ENCODE measurements at regions of chr19 and their contacts with region 1.

Region 1: GRCh38 chr19:48646001-48646721 is at the start of gene CA11:
- DNase-seq: peak; percentile 91 to 96 (median 94)
- H3K4me3 ChIP-seq: peak within 1 kb of the TSS; percentile 85 to 87
- H3K4me3 Mint-ChIP-seq: peak within 1 kb of the TSS; percentile 86 to 98 (median 93)
- H3K27ac ChIP-seq: peak within 1 kb of the TSS; percentile 77
- H3K27ac Mint-ChIP-seq: peak within 1 kb of the TSS; percentile 83 to 97 (median 96)
- H3K4me1 ChIP-seq: peaks cover 46% of the 10 kb centered on the region
- H3K4me1 Mint-ChIP-seq: peaks cover 23 to 55% (median 41%) of the 10 kb centered on the region in 4 donors
- H3K27me3 ChIP-seq: no peaks in the 10 kb centered on the region
- H3K27me3 Mint-ChIP-seq: no peaks in the 10 kb centered on the region
- total RNA-seq, gene CA11: 13.7 to 15.4 TPM

Region 2: GRCh38 chr19:48624067-48624594 is 22.0 kb before region 1 on chr19:
- CTCF ChIA-PET with region 1: interaction called, 7 read pairs
- POLR2A ChIA-PET with region 1: interaction called, 76 read pairs
- intact Hi-C with region 1: loop called (anchors 1 kb)
- DNase-seq: peak; percentile 87 to 91 (median 90)
- H3K4me3 ChIP-seq: peak overlapping the region; percentile 13 to 33
- H3K4me3 Mint-ChIP-seq: peak overlapping the region; percentile 59 to 93 (median 84)
- H3K27ac ChIP-seq: peak overlapping the region; percentile 68
- H3K27ac Mint-ChIP-seq: peak overlapping the region; percentile 79 to 98 (median 96)
- H3K4me1 ChIP-seq: peaks cover 27% of the 10 kb centered on the region
- H3K4me1 Mint-ChIP-seq: peaks cover 22 to 54% (median 34%) of the 10 kb centered on the region in 4 donors
- H3K27me3 ChIP-seq: no peaks in the 10 kb centered on the region
- H3K27me3 Mint-ChIP-seq: no peaks in the 10 kb centered on the region

Region 3: GRCh38 chr19:48660854-48661731 is 14.9 kb after region 1 on chr19:
- CTCF ChIA-PET with region 1: interaction called, 4 read pairs
- POLR2A ChIA-PET with region 1: interaction called, 8 read pairs
- intact Hi-C with region 1: loop called (anchors 1 kb)
- DNase-seq: peak; percentile 82 to 88 (median 85)
- H3K4me3 ChIP-seq: peak overlapping the region in 1 of 2 donors; percentile 25
- H3K4me3 Mint-ChIP-seq: peak overlapping the region; percentile 70 to 87 (median 81)
- H3K27ac ChIP-seq: peak overlapping the region; percentile 44
- H3K27ac Mint-ChIP-seq: peak overlapping the region; percentile 79 to 99 (median 98)
- H3K4me1 ChIP-seq: peaks cover 10% of the 10 kb centered on the region
- H3K4me1 Mint-ChIP-seq: peaks cover 5 to 12% (median 8%) of the 10 kb centered on the region in 4 donors
- H3K27me3 ChIP-seq: no peaks in the 10 kb centered on the region
- H3K27me3 Mint-ChIP-seq: no peaks in the 10 kb centered on the region

Region 4: GRCh38 chr19:48713864-48714758 is 68.0 kb after region 1 on chr19:
- CTCF ChIA-PET with region 1: interaction called, 4 read pairs
- POLR2A ChIA-PET with region 1: interaction called, 15 read pairs
- intact Hi-C with region 1: loop called (anchors 1 kb)
- DNase-seq: peak; percentile 96 to 99 (median 97)
- H3K4me3 ChIP-seq: peak overlapping the region; percentile 63 to 73
- H3K4me3 Mint-ChIP-seq: peak overlapping the region; percentile 83 to 94 (median 90)
- H3K27ac ChIP-seq: peak overlapping the region; percentile 70
- H3K27ac Mint-ChIP-seq: peak overlapping the region; percentile 57 to 95 (median 92)
- H3K4me1 ChIP-seq: peaks cover 24% of the 10 kb centered on the region
- H3K4me1 Mint-ChIP-seq: peaks cover 4 to 34% (median 15%) of the 10 kb centered on the region in 4 donors
- H3K27me3 ChIP-seq: no peaks in the 10 kb centered on the region
- H3K27me3 Mint-ChIP-seq: no peaks in the 10 kb centered on the region

Region 5: DNA sequence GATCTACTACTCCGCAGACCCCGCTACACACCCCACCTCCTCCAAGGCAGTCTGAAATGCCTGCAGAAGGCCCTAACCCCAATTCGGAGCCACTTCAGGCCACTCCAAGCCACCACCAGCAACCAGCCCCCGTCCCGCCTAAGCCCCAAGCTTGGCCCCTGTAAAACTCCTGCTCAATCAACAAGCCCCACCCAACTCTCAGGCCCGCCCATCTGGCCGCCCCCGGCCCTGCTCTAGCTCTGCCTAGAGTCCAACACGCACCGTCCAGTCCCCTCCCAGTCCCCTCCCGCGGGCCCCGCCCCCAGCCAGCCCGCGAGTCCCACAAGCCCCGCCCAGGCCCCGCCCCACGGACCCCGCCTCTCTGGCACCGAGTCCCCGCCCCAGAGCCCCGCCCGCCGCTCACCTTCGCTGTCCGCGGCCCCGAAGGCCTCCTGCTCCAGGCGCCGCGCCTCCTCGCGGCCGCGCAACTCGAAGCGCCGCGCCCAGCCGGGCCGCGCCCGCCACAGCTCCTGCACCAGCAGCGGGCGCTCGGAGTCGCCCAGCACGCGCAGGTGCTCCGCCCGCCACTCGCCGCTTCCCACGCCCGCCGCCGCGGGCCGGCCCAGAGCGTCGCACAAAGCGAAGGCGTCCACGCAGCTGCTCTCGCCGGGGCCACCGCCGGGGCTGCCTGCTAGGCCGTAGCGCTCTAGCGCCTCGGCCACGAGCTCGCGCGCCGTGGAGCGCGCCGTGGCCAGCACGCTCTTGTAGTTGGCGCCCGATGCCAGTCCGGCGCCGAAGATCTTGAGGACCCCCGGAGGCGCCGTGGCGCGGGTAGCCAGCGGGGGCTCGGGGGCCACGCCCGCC is 92.6 kb after region 1 on chr19:
- CTCF ChIA-PET with region 1: interaction called, 9 read pairs
- POLR2A ChIA-PET with region 1: interaction called, 21 read pairs
- intact Hi-C with region 1: loop called (anchors 1 kb)
- DNase-seq: peak; percentile 85 to 91 (median 86)
- H3K4me3 ChIP-seq: peak overlapping the region in 1 of 2 donors; percentile 24
- H3K4me3 Mint-ChIP-seq: peak overlapping the region; percentile 31 to 72 (median 62)
- H3K27ac ChIP-seq: no peak overlapping the region
- H3K27ac Mint-ChIP-seq: peak overlapping the region in 6 of 7 donors; percentile 27 to 92 (median 72)
- H3K4me1 ChIP-seq: peaks cover 29% of the 10 kb centered on the region
- H3K4me1 Mint-ChIP-seq: peaks cover 3 to 28% (median 16%) of the 10 kb centered on the region in 4 donors
- H3K27me3 ChIP-seq: no peaks in the 10 kb centered on the region
- H3K27me3 Mint-ChIP-seq: no peaks in the 10 kb centered on the region

Region 6: GRCh38 chr19:48806518-48806817 is 160.3 kb after region 1 on chr19:
- CTCF ChIA-PET with region 1: no interaction called
- POLR2A ChIA-PET with region 1: no interaction called
- intact Hi-C with region 1: no loop called
- DNase-seq: peak in 4 of 5 donors; percentile 42 to 60 (median 54)
- H3K4me3 ChIP-seq: no peak overlapping the region
- H3K4me3 Mint-ChIP-seq: peak overlapping the region in 2 of 8 donors; percentile 59 to 75
- H3K27ac ChIP-seq: no peak overlapping the region
- H3K27ac Mint-ChIP-seq: peak overlapping the region in 3 of 7 donors; percentile 64 to 78 (median 74)
- H3K4me1 ChIP-seq: peaks cover 13% of the 10 kb centered on the region
- H3K4me1 Mint-ChIP-seq: peaks cover 13 to 34% (median 23%) of the 10 kb centered on the region in 4 donors
- H3K27me3 ChIP-seq: no peaks in the 10 kb centered on the region
- H3K27me3 Mint-ChIP-seq: no peaks in the 10 kb centered on the region

Region 7: DNA sequence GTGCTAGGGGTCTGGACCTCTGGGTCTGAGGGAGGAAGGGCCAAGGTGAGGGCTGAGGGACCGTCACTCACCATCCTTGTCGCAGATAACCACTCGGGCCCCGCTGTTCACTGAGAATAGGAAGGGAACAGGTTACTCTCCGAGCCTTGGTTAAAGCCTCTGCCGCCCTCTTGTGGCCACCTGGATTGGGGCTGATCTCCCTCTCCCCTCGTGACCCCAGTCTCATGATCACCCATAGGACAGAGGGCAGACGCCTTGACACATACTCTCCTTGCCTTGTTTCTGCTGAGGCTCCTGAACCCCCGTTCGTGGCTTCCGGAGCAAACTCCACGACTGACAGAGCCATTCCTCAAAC is 189.6 kb after region 1 on chr19:
- CTCF ChIA-PET with region 1: interaction called, 19 read pairs
- POLR2A ChIA-PET with region 1: interaction called, 3 read pairs
- intact Hi-C with region 1: loop called (anchors 1 kb)
- DNase-seq: peak; percentile 87 to 91 (median 89)
- H3K4me3 ChIP-seq: peak overlapping the region in 1 of 2 donors; percentile 51
- H3K4me3 Mint-ChIP-seq: peak overlapping the region; percentile 77 to 91 (median 84)
- H3K27ac ChIP-seq: no peak overlapping the region
- H3K27ac Mint-ChIP-seq: peak overlapping the region in 6 of 7 donors; percentile 68 to 92 (median 86)
- H3K4me1 ChIP-seq: peaks cover 21% of the 10 kb centered on the region
- H3K4me1 Mint-ChIP-seq: peaks cover 15 to 21% (median 16%) of the 10 kb centered on the region in 4 donors
- H3K27me3 ChIP-seq: no peaks in the 10 kb centered on the region
- H3K27me3 Mint-ChIP-seq: peaks cover 4 to 14% of the 10 kb centered on the region in 2 donors

Region 8: DNA sequence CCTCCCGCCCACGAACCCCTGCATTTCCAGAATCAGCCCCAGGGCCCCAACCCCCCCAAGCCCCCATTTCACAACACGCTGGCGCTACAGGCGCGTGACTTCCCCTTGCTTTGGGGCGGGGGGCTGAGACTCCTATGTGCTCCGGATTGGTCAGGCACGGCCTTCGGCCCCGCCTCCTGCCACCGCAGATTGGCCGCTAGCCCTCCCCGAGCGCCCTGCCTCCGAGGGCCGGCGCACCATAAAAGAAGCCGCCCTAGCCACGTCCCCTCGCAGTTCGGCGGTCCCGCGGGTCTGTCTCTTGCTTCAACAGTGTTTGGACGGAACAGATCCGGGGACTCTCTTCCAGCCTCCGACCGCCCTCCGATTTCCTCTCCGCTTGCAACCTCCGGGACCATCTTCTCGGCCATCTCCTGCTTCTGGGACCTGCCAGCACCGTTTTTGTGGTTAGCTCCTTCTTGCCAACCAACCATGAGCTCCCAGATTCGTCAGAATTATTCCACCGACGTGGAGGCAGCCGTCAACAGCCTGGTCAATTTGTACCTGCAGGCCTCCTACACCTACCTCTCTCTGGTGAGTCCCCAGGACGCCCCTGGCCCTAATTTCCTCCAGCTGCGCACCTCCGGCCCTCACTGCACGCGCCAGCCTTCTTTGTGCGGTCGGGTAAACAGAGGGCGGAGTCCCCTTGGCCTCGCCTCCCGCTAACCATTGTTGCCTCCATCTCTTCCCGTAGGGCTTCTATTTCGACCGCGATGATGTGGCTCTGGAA is 319.1 kb after region 1 on chr19 and contains the start of gene FTL:
- CTCF ChIA-PET with region 1: interaction called, 7 read pairs
- POLR2A ChIA-PET with region 1: interaction called, 6 read pairs
- intact Hi-C with region 1: loop called (anchors 5 kb)
- DNase-seq: peak; percentile 81 to 87 (median 85)
- H3K4me3 ChIP-seq: peak within 1 kb of the TSS; percentile 84 to 91
- H3K4me3 Mint-ChIP-seq: peak within 1 kb of the TSS; percentile 93 to 100 (median 96)
- H3K27ac ChIP-seq: peak within 1 kb of the TSS; percentile 64
- H3K27ac Mint-ChIP-seq: peak within 1 kb of the TSS; percentile 96 to 100 (median 97)
- H3K4me1 ChIP-seq: peaks cover 43% of the 10 kb centered on the region
- H3K4me1 Mint-ChIP-seq: peaks cover 30 to 67% (median 46%) of the 10 kb centered on the region in 4 donors
- H3K27me3 ChIP-seq: no peaks in the 10 kb centered on the region
- H3K27me3 Mint-ChIP-seq: no peaks in the 10 kb centered on the region
- total RNA-seq, gene FTL: 1,304 to 1,371 TPM